ENCODE measurements at regions of chr3 and their contacts with region 1.

Region 1: DNA sequence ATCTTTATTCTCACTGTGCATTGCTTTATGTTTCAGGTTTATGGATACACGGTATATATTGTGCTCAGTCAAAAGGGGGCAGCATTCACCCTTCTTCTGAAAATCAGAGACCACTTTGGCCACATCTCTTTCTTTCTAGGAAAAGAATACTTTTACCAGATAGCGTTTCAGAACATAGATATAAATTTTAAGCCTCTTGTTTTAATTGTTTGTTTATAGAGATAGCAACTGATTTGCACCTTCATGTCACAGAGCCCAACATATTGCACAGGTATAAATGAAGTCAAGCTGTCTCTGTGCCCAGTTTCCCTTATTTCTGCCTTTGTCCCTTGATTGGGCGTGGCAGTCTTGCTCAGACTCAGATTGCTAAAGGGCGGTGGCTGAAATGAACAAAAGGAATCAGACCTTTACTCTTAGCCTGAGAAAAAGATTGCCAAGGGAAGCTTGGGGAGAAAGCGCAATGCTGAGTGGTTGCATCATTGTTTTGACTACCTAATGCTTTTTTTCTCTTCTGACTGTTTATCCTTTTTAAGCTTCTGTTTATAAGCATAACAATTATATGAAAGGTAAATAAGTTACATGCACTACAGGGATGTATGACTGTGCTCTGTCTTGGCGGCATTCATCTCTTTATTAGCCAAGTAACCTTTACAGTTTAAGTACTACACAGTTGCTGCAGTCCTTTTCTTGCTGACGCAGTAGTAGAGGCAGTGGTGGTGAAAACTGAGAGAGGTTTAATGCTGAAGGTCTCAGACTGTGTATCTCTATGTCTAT is 70.8 kb upstream of the ZBTB20 start:
- DNase-seq: peak; percentile 9
- ATAC-seq: peak; percentile 62

Region 2: DNA sequence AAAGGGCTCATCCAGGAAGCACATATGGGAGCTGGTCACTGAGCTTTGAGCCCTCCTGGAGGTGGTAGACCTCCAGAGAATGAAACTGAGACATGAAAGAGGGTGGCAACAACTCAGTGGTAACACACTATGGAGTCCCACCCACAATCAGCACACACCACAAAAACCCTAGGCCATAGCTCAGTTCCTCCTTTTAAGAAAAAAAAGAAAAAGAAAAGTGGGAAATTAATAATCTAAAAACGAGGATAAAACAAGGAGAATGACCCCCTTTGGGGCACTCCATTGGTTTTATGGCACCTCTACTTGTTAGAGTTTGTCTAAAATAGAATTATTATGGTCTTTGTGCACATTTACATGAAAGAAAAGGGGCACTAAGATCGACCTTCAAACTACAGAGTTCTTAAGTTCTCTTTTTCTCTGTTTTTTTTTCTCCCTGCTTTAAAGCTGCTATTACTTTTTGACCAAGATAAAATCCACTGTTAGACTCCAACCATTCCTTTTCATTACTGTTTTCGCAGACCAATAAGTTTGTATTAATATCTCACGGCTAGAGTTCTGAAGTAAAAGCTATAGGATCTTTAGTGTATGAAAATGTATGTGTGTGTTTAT is 30.6 kb before region 1 on chr3:
- intact Hi-C with region 1: no loop called
- DNase-seq: no peak
- ATAC-seq: no peak

Region 3: DNA sequence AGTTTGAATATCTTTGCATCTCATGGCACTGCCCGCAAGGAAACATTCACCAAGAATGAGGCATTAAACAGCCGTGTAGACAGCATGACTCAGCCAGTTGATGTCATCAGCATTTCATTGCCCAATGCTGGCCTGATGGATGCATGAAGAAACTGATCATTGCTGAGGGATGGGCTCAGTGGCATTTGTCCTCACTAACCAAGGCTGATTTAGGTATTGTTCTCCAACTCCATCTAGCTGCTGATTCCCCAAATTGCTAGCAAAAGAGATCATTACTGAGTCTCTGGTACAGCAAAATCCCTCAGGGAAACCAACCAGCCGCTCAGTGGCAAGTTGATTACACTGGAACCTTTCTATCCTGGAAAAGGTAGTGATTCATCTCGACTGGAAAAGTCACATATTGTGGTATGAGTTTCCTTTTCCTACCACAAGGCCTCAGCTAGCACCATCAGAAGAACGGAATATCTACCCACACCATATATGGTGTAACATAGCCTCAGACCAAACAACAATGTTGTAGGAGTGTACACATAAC is 219.0 kb after region 1 on chr3:
- intact Hi-C with region 1: loop called (anchors 5 kb)
- DNase-seq: no peak
- ATAC-seq: no peak

Region 4: DNA sequence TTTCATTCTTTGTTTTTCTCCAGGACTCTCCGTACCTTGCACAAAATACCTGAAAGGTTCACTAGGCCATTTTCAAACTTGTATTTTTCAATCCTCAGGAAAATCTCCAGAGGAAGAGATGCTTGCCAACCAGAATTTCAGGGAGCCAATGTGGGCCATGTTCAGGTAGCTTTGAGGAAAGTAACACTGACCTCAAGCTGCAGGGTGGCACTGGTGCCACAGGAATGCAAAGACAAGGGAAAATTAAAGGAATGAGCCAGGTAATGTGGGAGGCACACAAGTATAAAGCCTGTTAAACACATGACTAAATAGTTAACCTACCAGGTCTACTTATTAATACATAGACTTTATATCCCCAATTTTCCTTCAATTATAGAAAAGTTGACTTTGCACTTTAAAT is 353.5 kb after region 1 on chr3:
- intact Hi-C with region 1: loop called (anchors 1 kb)
- DNase-seq: no peak
- ATAC-seq: no peak

Region 5: DNA sequence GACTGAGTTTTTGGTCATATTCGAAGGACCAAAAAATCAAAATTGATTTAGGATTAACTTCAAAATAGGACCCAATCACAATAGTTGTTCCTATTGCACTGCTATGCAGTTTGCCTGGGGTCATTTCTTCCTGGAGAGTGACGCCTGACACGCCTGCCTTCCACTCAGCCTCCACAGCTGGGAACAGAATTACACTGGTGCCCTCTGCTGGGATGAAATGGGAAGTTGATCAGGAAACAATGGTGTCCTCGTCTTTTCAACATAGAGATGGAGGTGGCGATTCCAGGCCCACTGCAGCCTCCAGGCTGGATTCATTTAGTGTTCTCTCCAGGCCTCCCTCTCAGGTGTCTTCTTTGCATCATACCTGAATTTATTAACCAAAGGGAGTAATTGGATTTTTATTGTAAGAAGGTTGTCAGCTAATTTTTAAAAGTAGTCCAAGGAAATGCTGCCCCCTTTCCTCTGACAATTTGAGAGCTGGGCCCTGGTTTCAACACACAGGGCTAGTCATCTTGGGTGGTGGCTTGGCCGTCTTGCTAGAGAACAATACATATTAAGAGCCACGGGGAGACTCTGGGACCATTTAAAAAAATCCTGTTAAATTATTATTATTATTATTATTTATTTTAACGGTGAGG is 475.1 kb after region 1 on chr3:
- intact Hi-C with region 1: loop called (anchors 1 kb)
- DNase-seq: no peak
- ATAC-seq: peak; percentile 95

Region 6: GRCh38 chr3:115783938-115784738 is 566.3 kb after region 1 on chr3:
- intact Hi-C with region 1: loop called (anchors 1 kb)
- DNase-seq: peak; percentile 93
- ATAC-seq: peak; percentile 96